ENCODE measurements at regions of chr4 and their contacts with region 1.

Region 1: GRCh38 chr4:76949276-76950051 is at the start of gene SEPTIN11:
- DNase-seq: peak; percentile 94
- H3K4me3 ChIP-seq: peak within 1 kb of the TSS; percentile 64 to 91 (median 71)
- H3K27ac ChIP-seq: peak within 1 kb of the TSS; percentile 90 to 97 (median 94)
- H3K4me1 ChIP-seq: peaks cover 8 to 39% (median 19%) of the 10 kb centered on the region in 4 donors
- H3K27me3 ChIP-seq: no peaks in the 10 kb centered on the region
- CTCF ChIP-seq: no peak
- EP300 ChIP-seq: no peak
- POLR2A ChIP-seq: peak; percentile 94
- total RNA-seq, gene SEPTIN11: 48.6 to 127 (median 78.8) TPM

Region 2: GRCh38 chr4:77022560-77023179 is 73.2 kb after region 1 on chr4:
- in situ Hi-C with region 1: loop called in 1 of 4 experiments (anchors 10 kb)
- intact Hi-C with region 1: no loop called
- DNase-seq: no peak
- H3K4me3 ChIP-seq: no peak overlapping the region
- H3K27ac ChIP-seq: no peak overlapping the region
- H3K4me1 ChIP-seq: no peaks in the 10 kb centered on the region
- H3K27me3 ChIP-seq: no peaks in the 10 kb centered on the region
- CTCF ChIP-seq: no peak
- EP300 ChIP-seq: no peak
- POLR2A ChIP-seq: no peak

Region 3: GRCh38 chr4:77156533-77156911 is 207.1 kb after region 1 on chr4:
- in situ Hi-C with region 1: no loop called
- intact Hi-C with region 1: loop called (anchors 10 kb)
- DNase-seq: peak; percentile 96
- H3K4me3 ChIP-seq: peak overlapping the region; percentile 82 to 91 (median 90)
- H3K27ac ChIP-seq: peak overlapping the region; percentile 94 to 99 (median 94)
- H3K4me1 ChIP-seq: peaks cover 8 to 31% (median 20%) of the 10 kb centered on the region in 4 donors
- H3K27me3 ChIP-seq: no peaks in the 10 kb centered on the region
- CTCF ChIP-seq: no peak
- EP300 ChIP-seq: no peak
- POLR2A ChIP-seq: peak; percentile 58